ENCODE measurements at regions of chr7 and their contacts with region 1.

Region 1: DNA sequence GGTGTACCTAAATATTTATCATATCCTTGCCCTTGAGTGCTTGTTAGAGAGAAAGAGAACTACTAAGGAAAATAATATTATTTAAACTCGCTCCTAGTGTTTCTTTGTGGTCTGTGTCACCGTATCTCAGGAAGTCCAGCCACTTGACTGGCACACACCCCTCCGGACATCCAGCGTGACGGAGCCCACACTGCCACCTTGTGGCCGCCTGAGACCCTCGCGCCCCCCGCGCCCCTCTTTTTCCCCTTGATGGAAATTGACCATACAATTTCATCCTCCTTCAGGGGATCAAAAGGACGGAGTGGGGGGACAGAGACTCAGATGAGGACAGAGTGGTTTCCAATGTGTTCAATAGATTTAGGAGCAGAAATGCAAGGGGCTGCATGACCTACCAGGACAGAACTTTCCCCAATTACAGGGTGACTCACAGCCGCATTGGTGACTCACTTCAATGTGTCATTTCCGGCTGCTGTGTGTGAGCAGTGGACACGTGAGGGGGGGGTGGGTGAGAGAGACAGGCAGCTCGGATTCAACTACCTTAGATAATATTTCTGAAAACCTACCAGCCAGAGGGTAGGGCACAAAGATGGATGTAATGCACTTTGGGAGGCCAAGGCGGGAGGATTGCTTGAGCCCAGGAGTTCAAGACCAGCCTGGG is 11.4 kb downstream of the SERPINE1 start:
- DNase-seq: peak; percentile 80
- CTCF ChIP-seq: peak; percentile 46

Region 2: DNA sequence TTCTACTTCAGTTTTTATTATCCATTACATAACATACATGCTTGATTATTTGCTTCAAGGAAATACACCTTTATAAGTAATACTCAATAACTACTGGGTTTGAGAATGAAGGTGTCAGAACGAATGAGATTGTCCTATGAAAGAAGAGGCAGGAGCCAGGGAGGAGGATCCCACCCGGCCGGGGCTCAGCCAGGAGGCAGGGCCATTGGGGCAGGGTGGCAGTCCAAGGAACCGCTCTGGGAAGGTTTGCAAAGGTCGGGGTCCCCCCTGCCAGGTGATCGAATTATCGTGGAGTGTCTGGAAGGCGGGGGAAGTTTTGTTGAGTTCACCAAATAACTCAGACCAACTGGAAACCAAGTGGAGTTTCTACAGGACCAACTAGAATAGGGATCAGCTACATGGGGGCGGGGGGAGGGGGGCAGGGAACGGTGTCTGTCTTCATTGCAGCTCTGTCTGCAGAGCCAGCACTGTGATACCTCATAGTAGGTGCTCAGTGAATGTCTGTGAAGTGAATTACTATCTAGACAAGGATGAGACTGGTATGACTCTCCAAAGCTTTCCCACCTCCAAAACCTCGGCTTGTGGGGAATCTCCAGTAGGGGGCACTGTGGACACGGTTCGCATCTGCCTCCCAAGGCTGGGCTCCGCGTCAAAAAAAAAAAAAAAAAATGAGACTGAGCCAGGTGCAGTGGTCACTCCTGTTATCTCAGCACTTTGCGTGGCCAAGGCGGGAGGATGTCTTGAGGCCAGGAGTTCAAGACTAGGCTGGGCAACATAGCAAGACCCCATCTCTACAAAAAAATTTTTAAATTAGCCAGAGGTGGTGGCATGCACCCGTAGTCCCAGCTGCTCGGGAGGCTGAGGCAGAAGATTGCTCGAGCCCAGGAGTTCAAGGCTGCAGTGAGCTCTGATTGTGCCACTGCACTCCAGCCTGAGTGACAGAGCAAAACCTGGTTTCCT is 43.6 kb before region 1 on chr7:
- CTCF ChIA-PET with region 1: interaction called, 10 read pairs
- POLR2A ChIA-PET with region 1: no interaction called
- DNase-seq: no peak
- CTCF ChIP-seq: peak; percentile 45

Region 3: DNA sequence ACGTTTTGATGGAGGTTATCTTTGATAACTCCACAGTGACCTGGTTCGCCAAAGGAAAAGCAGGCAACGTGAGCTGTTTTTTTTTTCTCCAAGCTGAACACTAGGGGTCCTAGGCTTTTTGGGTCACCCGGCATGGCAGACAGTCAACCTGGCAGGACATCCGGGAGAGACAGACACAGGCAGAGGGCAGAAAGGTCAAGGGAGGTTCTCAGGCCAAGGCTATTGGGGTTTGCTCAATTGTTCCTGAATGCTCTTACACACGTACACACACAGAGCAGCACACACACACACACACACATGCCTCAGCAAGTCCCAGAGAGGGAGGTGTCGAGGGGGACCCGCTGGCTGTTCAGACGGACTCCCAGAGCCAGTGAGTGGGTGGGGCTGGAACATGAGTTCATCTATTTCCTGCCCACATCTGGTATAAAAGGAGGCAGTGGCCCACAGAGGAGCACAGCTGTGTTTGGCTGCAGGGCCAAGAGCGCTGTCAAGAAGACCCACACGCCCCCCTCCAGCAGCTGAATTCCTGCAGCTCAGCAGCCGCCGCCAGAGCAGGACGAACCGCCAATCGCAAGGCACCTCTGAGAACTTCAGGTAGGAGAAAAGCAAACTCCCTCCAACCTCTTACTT is 11.6 kb before region 1 on chr7 and contains the start of gene SERPINE1:
- CTCF ChIA-PET with region 1: interaction called, 81 read pairs
- POLR2A ChIA-PET with region 1: interaction called, 6 read pairs
- DNase-seq: peak; percentile 84
- CTCF ChIP-seq: no peak

Region 4: DNA sequence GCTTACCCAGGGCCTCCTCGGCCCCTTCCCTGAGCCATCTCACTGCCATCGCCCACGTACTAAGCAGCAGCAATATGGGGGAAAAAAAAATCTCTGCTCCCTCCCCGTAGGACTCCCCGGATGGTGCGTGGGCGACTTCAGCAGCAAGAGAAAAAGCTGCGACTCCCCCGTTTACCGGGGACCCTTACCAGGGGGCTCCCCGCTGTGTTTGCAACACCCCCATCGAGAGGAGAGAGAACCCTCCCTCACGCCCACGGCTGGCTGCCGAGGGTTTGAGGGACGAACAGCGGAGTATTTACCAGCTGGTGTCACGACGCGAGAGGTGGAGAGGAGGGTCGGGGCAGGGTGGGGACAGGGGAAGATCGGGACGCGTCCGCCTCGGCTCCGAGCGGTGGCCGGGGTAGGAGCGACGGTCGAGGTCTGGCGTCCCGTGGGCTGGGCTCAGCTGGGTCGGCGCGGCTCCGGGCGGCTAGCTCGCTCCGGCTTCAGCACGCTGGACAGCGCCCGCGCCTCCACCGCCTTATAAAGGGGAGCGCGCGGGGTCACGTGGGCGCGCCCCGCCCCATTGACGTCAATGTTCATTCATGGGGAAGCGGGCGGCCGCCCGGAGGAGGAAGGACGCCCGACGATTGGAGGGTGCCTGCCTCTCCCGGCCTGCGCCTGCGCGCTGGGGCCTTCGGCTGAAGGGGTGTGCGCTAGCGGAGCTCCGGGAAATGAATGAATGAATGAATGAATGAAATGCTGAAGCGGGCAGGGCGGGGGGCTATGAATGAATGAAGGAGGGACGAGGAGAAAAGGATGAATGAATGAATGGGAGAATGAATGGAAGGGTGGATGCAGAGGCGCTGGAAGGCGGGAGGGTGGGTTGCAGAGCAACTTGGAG is 27.0 kb after region 1 on chr7 and contains the start of gene VGF:
- CTCF ChIA-PET with region 1: interaction called, 27 read pairs
- POLR2A ChIA-PET with region 1: no interaction called
- DNase-seq: peak; percentile 97
- CTCF ChIP-seq: no peak

Region 5: GRCh38 chr7:101195884-101196283 is 57.5 kb after region 1 on chr7:
- CTCF ChIA-PET with region 1: interaction called, 186 read pairs
- POLR2A ChIA-PET with region 1: no interaction called
- DNase-seq: no peak
- CTCF ChIP-seq: no peak

Region 6: DNA sequence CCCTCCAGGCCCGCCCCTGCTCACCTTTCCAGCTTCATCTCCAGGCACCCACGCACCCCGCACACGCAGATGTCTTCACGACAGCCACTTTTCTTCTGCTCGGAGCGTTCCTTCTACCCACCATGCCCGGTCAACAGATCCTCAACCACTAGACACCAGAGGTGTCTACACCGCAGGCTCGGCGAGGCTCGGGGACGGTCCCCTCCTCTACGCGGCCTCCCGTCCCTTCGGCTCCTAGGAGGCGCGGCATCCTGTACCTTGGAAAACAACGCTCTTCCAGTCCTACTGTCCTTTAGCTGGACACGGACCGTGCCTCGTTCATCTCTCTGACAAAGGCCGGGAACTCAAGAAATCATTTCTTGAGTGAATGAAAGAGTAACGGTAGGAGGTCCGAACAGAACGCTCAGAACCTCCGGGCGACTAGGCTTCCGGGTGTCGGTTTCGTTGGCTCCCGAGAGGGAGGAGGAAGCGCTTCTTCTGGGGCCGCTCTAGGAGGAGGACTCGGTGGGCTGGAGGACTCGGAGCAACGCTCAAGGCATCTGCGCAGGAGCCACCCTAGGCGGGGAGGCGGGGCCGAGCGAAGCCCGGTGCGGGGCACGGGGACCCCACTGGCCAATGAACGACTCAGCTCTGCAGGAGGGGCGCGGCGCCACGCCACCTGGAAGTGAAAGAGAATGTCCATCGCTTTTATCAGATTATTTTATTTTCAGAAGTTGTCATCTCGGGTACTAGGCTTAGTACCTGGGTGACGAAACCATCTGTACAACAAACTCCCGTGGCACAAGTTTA is 113.7 kb after region 1 on chr7:
- CTCF ChIA-PET with region 1: interaction called, 10 read pairs
- POLR2A ChIA-PET with region 1: no interaction called
- DNase-seq: peak; percentile 98
- CTCF ChIP-seq: no peak

Region 7: DNA sequence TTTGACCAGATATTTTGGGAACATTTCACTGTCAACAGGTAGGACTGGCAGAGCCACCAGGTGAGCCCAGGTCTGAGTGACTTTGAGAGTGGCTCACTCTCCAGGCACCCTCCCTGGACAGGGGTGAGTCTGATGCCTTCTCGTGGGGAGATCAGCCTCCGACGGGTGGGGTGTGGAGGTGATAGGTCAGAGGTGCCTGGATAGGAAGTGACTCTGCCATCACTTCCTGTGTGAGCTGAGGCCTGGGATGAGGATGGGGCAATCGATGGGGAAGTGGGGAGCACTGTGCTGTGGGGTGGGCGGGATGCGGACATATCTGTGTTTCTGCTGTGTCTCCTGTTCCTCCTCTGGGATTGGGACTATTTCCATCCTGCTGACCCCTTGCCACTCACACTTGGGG is 148.7 kb after region 1 on chr7:
- CTCF ChIA-PET with region 1: interaction called, 86 read pairs
- POLR2A ChIA-PET with region 1: no interaction called
- DNase-seq: no peak
- CTCF ChIP-seq: no peak